RWPE1 (cell line): ENCODE measurements at regions of chr7 and their contacts with region 1.

Region 1: DNA sequence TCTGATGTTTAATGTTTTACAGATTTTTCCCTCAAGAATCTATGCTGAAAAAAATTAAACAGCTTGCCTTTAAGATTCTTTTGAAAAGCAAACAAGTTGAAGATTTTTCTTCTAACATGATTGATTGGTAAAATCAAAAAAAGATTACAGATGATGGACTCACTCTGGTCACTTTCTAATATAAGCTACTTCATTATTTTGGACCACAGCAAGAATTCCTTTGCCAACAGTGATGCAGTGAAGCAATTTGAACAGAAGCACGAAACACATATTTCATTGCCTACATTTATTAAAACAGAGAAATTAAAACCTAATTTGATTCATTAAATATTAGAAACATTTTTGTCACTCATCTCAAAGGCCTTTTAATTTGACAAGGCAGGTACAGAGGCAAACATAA is 82.1 kb upstream of the SGCE start:
- DNase-seq: no peak
- H3K27ac ChIP-seq: no peak overlapping the region
- CTCF ChIP-seq: no peak

Region 2: DNA sequence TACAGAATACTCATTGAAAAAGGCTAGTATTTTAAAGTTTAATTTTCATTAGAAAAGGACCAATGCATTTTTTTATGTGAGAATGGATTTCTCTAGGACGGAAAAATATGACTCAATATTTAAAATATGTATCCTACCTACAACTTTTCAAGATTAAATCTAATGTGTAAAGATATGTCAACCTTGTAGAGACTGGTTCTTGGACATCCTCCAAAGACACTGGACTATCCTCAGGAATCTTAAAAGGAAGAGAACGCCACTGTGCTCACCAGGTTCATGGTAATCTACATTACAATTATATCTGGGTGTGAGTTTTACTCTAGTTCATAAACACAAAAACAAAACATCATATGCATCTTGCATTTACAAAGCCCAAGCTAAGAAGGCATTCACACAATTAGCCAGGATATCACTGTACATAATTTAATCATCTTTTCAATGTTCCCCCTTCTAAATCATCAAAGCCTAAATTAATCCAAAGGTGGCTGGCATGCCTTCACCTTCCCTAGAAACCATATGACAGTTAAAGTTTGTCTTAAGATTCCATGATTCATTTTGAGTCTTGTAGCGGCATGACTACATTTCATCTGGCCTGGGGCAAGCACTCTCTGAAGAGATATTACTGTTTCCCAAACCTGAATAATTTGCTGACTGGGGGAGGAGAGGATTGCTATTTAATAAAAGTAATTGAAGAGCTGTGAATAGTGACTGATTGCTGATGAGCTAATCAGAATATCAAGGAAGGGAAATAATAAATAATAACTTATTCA is 94.1 kb before region 1 on chr7:
- CTCF ChIA-PET with region 1: no interaction called
- POLR2A ChIA-PET with region 1: no interaction called
- DNase-seq: peak; percentile 61
- H3K27ac ChIP-seq: no peak overlapping the region
- CTCF ChIP-seq: no peak

Region 3: GRCh38 chr7:94657771-94658693 is 80.0 kb before region 1 on chr7:
- CTCF ChIA-PET with region 1: no interaction called
- POLR2A ChIA-PET with region 1: no interaction called
- DNase-seq: peak; percentile 82
- H3K27ac ChIP-seq: peak overlapping the region; percentile 78
- CTCF ChIP-seq: no peak

Region 4: GRCh38 chr7:94710256-94710655 is 27.8 kb before region 1 on chr7:
- CTCF ChIA-PET with region 1: interaction called, 10 read pairs
- POLR2A ChIA-PET with region 1: no interaction called
- DNase-seq: no peak
- H3K27ac ChIP-seq: no peak overlapping the region
- CTCF ChIP-seq: no peak

Region 5: DNA sequence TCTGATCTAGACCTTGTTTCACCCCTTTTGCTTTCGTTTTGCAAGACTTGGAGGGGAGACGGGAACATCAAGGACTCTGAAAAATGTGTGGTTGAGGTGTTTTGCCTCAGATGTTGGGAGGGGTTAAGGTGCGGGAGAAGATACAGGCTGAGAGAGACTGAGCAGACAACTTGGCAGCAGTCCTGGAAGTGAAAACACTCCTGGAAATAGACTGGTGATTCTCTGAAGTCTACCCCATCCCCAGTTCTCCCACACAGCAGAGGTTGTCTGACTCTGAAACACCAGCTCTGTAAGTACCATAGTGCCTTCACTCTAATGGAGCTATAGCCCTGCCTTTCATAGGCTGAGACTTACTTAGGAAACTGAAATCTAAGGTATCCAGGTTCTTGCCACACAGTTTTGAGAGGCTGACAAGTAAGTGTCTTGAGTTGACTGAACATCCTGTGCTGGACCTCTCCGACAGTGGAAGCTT is 321.8 kb after region 1 on chr7:
- CTCF ChIA-PET with region 1: no interaction called
- POLR2A ChIA-PET with region 1: no interaction called
- DNase-seq: no peak
- H3K27ac ChIP-seq: no peak overlapping the region
- CTCF ChIP-seq: no peak